Breast epithelium (tissue), 4 donors: ENCODE measurements at regions of chr6 and their contacts with region 1.

Region 1: GRCh38 chr6:5828296-5828695 is 178.4 kb downstream of the NRN1 start:
- DNase-seq: no peak
- H3K4me3 ChIP-seq: no peak overlapping the region
- H3K27ac ChIP-seq: no peak overlapping the region
- H3K4me1 ChIP-seq: no peaks in the 10 kb centered on the region
- H3K27me3 ChIP-seq: no peaks in the 10 kb centered on the region
- CTCF ChIP-seq: no peak
- POLR2A ChIP-seq: no peak

Region 2: DNA sequence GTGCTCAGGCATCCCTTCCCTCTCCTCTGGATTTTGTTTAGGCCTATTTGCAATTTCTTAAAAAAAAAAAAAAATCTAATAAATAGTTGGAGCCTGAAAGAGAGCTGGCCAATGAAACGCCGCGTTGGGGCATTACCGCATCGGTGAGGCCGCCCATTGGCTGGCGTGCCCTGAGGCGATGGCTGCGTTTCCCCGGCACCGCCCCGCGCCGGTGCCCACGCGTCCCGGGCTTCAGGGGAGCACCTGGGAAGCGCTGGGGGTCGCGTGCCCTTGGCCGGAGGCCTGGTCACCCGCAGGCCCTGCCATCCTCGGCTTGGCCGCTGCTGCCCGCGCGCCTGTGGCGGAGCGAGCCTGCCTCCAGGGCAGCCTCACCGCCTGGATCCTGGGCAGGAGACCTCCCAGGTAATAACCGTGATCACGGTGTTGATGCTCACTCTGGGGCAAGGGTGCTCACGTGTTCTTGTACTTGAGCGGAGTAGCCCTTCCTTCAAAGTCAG is 23.0 kb after region 1 on chr6:
- intact Hi-C with region 1: loop called (anchors 2 kb)
- DNase-seq: no peak
- H3K4me3 ChIP-seq: peak overlapping the region; percentile 26 to 54 (median 35)
- H3K27ac ChIP-seq: no peak overlapping the region
- H3K4me1 ChIP-seq: no peaks in the 10 kb centered on the region
- H3K27me3 ChIP-seq: peaks cover 0 to 13% of the 10 kb centered on the region in 2 donors
- CTCF ChIP-seq: no peak
- POLR2A ChIP-seq: no peak